ENCODE measurements at regions of chr12 and their contacts with region 1.

Region 1: GRCh38 chr12:1795785-1796514 is 24.4 kb upstream of the LRTM2 start:
- DNase-seq: peak; percentile 90 to 92 (median 92)
- H3K4me3 ChIP-seq: peak overlapping the region; percentile 49 to 85 (median 66)
- H3K27ac ChIP-seq: peak overlapping the region in 1 of 2 experiments; percentile 6
- H3K4me1 ChIP-seq: peaks cover 0 to 22% (median 18%) of the 10 kb centered on the region in 4 experiments
- H3K27me3 ChIP-seq: no peaks in the 10 kb centered on the region

Region 2: DNA sequence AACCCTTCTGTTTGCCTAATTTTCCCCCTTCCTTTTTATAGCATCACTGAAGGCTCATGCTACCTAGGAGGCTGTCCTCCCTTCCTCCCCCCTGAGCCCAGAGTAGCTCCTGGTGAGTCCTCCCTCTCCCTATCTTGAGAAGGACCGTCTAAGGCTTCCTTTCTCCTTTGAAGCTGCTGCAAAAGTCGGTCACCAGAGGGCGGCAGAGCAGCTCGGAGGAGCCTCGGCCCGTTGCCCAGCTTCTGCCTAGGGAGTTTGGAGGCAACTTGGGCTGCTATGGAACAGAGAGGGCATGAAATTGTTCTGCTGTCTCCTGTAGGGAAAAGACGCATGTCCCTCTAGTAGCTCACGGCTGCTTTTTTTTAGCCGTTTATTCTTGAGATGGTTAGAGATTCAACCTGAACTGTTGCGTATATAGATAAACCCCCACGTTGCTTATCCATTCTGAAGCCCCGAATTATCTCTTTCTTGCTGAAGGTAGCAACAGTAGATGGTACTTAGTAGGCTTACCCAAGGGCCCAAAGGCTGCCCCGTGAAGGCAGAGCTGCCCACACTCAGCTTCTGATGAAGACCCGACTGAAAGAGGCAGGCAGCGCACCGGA is 161.3 kb before region 1 on chr12:
- CTCF ChIA-PET with region 1: interaction called, 106 read pairs
- POLR2A ChIA-PET with region 1: no interaction called
- DNase-seq: peak; percentile 64 to 76 (median 66)
- H3K4me3 ChIP-seq: no peak overlapping the region
- H3K27ac ChIP-seq: no peak overlapping the region
- H3K4me1 ChIP-seq: peaks cover 2 to 24% (median 18%) of the 10 kb centered on the region in 4 experiments
- H3K27me3 ChIP-seq: peaks cover 2 to 41% (median 26%) of the 10 kb centered on the region in 5 experiments

Region 3: DNA sequence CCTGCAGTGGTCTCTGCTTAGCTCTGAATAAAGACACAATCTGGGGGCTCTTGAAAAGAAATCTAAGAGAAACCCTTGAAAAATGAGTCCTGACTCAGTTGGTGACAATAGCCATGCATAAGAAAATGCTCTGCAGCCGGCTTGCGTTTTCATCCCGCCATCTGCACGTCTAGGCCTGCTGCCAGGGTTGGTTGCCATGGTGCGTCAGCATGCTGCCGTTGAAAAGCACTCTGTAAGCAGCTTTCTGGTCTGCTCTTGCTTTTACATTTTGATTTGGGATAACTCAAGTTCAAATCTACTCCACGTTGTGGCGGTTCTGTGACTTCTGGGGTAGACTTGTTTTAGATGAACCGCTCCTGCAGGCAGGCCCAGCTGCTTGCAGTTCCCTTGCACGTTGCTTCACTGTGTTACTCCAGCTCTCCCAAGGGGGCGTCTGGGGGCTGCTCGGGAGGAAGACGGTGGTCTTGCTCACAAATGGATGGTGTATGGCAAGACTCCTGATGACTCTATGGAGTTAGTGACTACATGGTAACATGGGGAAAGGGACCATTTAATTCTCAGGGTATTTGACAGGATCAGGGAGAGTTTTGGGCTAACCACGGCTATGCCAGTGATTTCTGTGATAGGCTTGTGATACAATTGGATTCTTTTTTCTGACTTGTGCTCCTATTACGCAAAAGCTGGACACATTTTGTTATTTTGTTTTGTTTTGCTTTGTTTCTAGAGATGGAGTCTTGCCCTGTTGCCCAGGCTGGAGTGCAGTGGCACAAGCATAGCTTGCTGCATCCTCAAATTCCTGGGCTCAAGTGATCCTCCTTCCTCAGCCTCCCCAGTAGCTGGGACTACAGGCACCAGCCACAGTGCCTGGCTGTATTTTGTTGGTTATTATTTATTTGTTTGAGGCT is 151.2 kb before region 1 on chr12:
- CTCF ChIA-PET with region 1: interaction called, 268 read pairs
- POLR2A ChIA-PET with region 1: no interaction called
- DNase-seq: peak in 2 of 3 donors; percentile 50 to 84
- H3K4me3 ChIP-seq: no peak overlapping the region
- H3K27ac ChIP-seq: no peak overlapping the region
- H3K4me1 ChIP-seq: peaks cover 0 to 10% (median 5%) of the 10 kb centered on the region in 4 experiments
- H3K27me3 ChIP-seq: no peaks in the 10 kb centered on the region

Region 4: GRCh38 chr12:1661553-1662335 is 134.2 kb before region 1 on chr12:
- CTCF ChIA-PET with region 1: interaction called, 268 read pairs
- POLR2A ChIA-PET with region 1: interaction called, 4 read pairs
- DNase-seq: peak; percentile 96 to 98 (median 97)
- H3K4me3 ChIP-seq: peak overlapping the region in 6 of 7 experiments; percentile 23 to 67 (median 42)
- H3K27ac ChIP-seq: no peak overlapping the region
- H3K4me1 ChIP-seq: peaks cover 5 to 26% (median 19%) of the 10 kb centered on the region in 4 experiments
- H3K27me3 ChIP-seq: no peaks in the 10 kb centered on the region

Region 5: GRCh38 chr12:1776170-1776948 is 19.6 kb before region 1 on chr12:
- CTCF ChIA-PET with region 1: interaction called, 11 read pairs
- POLR2A ChIA-PET with region 1: no interaction called
- DNase-seq: no peak
- H3K4me3 ChIP-seq: no peak overlapping the region
- H3K27ac ChIP-seq: no peak overlapping the region
- H3K4me1 ChIP-seq: peaks cover 0 to 5% (median 0%) of the 10 kb centered on the region in 4 experiments
- H3K27me3 ChIP-seq: no peaks in the 10 kb centered on the region

Measured in common myeloid progenitor, CD34-positive (primary cell).